ENCODE measurements at regions of chr11 and their contacts with region 1.

Region 1: GRCh38 chr11:67265633-67266423 is 445 bp upstream of the GRK2 start:
- DNase-seq: peak; percentile 95
- H3K4me3 Mint-ChIP-seq: peak overlapping the region; percentile 79
- H3K27ac Mint-ChIP-seq: peak overlapping the region; percentile 86
- H3K4me1 Mint-ChIP-seq: peaks cover 64% of the 10 kb centered on the region
- H3K27me3 Mint-ChIP-seq: no peaks in the 10 kb centered on the region

Region 2: GRCh38 chr11:67239783-67240575 is 25.8 kb before region 1 on chr11:
- intact Hi-C with region 1: loop called (anchors 2 kb)
- DNase-seq: peak; percentile 98
- H3K4me3 Mint-ChIP-seq: peak overlapping the region; percentile 100
- H3K27ac Mint-ChIP-seq: peak overlapping the region; percentile 98
- H3K4me1 Mint-ChIP-seq: peaks cover 43% of the 10 kb centered on the region
- H3K27me3 Mint-ChIP-seq: no peaks in the 10 kb centered on the region

Region 3: GRCh38 chr11:67288452-67289225 is 22.8 kb after region 1 on chr11:
- intact Hi-C with region 1: loop called (anchors 1 kb)
- DNase-seq: peak; percentile 97
- H3K4me3 Mint-ChIP-seq: peak overlapping the region; percentile 85
- H3K27ac Mint-ChIP-seq: peak overlapping the region; percentile 98
- H3K4me1 Mint-ChIP-seq: peaks cover 48% of the 10 kb centered on the region
- H3K27me3 Mint-ChIP-seq: no peaks in the 10 kb centered on the region

Region 4: DNA sequence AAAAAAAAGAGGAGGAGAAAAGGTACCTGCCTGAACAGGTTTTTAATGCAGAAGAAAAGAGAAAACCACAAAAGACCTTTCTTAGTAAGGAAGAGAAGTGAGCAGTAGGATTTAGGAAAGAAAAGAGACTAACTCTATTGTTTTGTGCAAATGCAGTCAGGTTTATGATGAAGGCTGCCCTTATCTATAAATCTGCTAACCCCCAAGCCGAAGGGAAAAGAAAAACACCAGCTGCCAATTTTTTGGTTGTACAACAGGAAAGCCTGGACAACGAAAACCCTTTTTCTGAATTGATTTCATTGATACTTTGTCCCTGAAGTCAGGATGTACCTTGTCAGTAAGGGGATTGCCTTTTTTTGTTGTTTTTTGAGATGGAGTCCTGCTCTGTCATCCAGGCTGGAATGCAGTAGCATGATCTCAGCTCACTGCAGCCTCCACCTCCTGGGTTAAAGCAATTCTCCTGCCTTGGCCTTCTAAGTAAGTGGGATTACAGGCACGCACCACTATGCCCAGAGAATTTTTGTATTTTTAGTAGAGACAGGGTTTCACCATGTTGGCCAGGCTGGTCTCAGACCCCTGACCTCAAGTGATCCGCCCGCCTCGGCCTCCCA is 66.4 kb after region 1 on chr11:
- intact Hi-C with region 1: no loop called
- DNase-seq: no peak
- H3K4me3 Mint-ChIP-seq: no peak overlapping the region
- H3K27ac Mint-ChIP-seq: no peak overlapping the region
- H3K4me1 Mint-ChIP-seq: no peaks in the 10 kb centered on the region
- H3K27me3 Mint-ChIP-seq: no peaks in the 10 kb centered on the region

Region 5: DNA sequence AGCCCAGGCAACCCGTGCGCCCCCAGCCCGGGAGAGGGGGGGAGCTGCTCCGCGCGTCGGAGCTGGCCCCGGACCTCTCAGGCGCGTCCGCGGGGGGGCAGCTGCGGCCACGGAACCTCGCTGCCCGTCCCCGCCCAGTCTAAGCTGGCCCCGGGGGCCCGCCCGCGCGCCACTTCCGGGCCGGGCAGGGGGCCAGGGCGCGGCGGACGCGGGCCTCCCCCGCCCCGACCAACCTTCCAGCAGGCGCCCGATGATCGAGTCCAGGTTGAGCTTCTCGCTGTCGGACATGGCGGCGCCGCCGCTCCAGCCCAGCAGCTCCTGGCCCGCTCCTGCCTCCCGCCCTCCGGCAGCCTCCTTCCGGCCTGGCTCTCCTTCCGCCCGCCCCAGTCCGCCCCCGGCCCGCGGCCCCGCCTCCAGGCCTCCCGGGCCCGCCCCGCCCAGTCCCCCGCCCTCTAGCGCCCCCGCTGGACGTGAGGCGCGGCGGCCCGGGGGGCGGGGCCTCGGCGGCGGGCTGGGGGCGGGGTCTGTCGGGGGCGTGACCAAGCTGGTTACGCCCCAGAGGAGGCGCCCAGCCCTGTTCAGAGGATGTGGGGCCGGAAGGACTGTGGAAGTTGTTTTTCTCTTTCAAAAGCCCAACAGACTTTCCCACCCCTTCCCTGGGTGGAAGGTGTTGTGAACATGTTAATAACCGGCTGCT is 135.8 kb after region 1 on chr11 and contains the start of gene PPP1CA:
- intact Hi-C with region 1: loop called (anchors 5 kb)
- DNase-seq: peak; percentile 96
- H3K4me3 Mint-ChIP-seq: peak within 1 kb of the TSS; percentile 91
- H3K27ac Mint-ChIP-seq: peak within 1 kb of the TSS; percentile 87
- H3K4me1 Mint-ChIP-seq: peaks cover 45% of the 10 kb centered on the region
- H3K27me3 Mint-ChIP-seq: no peaks in the 10 kb centered on the region
- total RNA-seq, gene PPP1CA: 251 and 252 TPM in 2 replicates